Panc1 (cell line): ENCODE measurements at regions of chr16 and their contacts with region 1.

Region 1: GRCh38 chr16:87850009-87851006 is 19.0 kb downstream of the SLC7A5 start:
- DNase-seq: no peak
- ATAC-seq: peak; percentile 11
- H3K4me3 ChIP-seq: no peak overlapping the region
- H3K27ac ChIP-seq: peak overlapping the region; percentile 94
- H3K4me1 ChIP-seq: peaks cover 76% of the 10 kb centered on the region
- H3K27me3 ChIP-seq: no peaks in the 10 kb centered on the region
- CTCF ChIP-seq: peak; percentile 92

Region 2: GRCh38 chr16:87778830-87779579 is 71.3 kb before region 1 on chr16:
- CTCF ChIA-PET with region 1: interaction called, 11 read pairs
- POLR2A ChIA-PET with region 1: no interaction called
- in situ Hi-C with region 1: no loop called
- intact Hi-C with region 1: no loop called
- DNase-seq: no peak
- ATAC-seq: peak; percentile 90
- H3K4me3 ChIP-seq: no peak overlapping the region
- H3K27ac ChIP-seq: peak overlapping the region; percentile 91
- H3K4me1 ChIP-seq: peaks cover 9% of the 10 kb centered on the region
- H3K27me3 ChIP-seq: no peaks in the 10 kb centered on the region
- CTCF ChIP-seq: peak; percentile 86

Region 3: DNA sequence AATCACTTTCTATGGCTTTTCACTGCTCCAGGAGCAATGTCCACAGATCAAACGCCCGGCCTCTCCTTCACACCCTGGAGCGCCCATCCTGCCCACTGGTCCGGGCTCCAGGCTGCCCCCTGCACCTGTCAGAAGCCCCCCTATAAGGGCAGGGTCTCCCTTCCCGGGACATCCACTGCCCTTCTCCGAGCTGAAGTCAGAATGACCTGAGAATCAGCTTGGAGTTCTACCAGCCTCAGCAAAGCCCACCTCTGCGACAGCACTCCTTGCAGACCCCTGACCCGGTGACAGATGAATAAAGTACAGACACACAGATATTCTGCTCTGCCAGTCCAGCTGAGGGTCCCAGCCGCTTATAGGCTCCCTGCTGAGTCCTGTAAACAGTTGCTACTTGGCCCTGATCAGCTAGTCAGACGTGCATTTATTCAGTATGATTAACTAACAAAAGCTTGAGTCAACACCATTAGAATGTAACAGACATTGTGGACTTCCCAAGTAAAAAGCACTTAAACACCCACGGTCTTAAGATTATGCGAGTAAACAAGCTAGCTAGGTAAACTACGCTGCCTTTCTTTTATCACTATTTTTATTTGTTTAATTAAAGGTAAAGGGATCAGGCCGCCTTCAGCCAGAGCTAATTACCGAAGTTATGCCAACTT is 14.2 kb after region 1 on chr16:
- CTCF ChIA-PET with region 1: interaction called, 16 read pairs
- POLR2A ChIA-PET with region 1: interaction called, 3 read pairs
- in situ Hi-C with region 1: no loop called
- intact Hi-C with region 1: no loop called
- DNase-seq: no peak
- ATAC-seq: no peak
- H3K4me3 ChIP-seq: peak overlapping the region; percentile 68 to 81
- H3K27ac ChIP-seq: peak overlapping the region; percentile 65
- H3K4me1 ChIP-seq: peaks cover 23% of the 10 kb centered on the region
- H3K27me3 ChIP-seq: no peaks in the 10 kb centered on the region
- CTCF ChIP-seq: no peak

Region 4: GRCh38 chr16:87874639-87875465 is 24.5 kb after region 1 on chr16:
- CTCF ChIA-PET with region 1: interaction called, 10 read pairs
- POLR2A ChIA-PET with region 1: no interaction called
- in situ Hi-C with region 1: no loop called
- intact Hi-C with region 1: no loop called
- DNase-seq: no peak
- ATAC-seq: no peak
- H3K4me3 ChIP-seq: no peak overlapping the region
- H3K27ac ChIP-seq: no peak overlapping the region
- H3K4me1 ChIP-seq: peaks cover 9% of the 10 kb centered on the region
- H3K27me3 ChIP-seq: no peaks in the 10 kb centered on the region
- CTCF ChIP-seq: no peak